PC-3 (cell line): ENCODE measurements at regions of chr1 and their contacts with region 1.

Region 1: GRCh38 chr1:46643368-46643775 is 24.8 kb downstream of the ATPAF1 start:
- DNase-seq: peak; percentile 98
- ATAC-seq: peak; percentile 99
- H3K4me3 ChIP-seq: no peak overlapping the region
- H3K27ac ChIP-seq: peak overlapping the region; percentile 59
- H3K4me1 ChIP-seq: peaks cover 21% of the 10 kb centered on the region
- H3K27me3 ChIP-seq: no peaks in the 10 kb centered on the region
- CTCF ChIP-seq: no peak

Region 2: DNA sequence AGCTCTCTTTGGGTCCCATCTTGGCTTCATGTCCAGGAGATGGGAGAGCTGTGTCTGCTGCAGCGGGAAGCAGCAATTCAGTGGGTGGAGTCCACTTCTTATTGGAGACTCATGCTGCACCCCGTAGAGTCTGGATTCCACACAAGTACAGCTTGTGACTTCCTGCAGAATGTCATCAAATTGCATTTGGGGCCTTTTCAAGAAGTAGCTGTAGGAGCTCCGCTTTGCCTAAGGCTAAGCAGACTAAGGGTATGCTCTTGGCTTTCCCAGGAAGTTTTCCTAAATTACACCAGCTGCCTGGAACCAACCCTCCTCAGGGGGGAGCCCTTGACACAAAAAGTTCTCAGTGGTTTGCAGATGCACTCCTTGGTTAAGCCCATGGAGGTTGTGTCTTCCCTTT is 21.0 kb before region 1 on chr1:
- CTCF ChIA-PET with region 1: no interaction called
- POLR2A ChIA-PET with region 1: no interaction called
- intact Hi-C with region 1: loop called (anchors 2 kb)
- DNase-seq: peak; percentile 64
- ATAC-seq: peak; percentile 66
- H3K4me3 ChIP-seq: peak overlapping the region; percentile 21; the same call in 1 of the 2 replicates
- H3K27ac ChIP-seq: peak overlapping the region; percentile 74
- H3K4me1 ChIP-seq: peaks cover 24% of the 10 kb centered on the region
- H3K27me3 ChIP-seq: no peaks in the 10 kb centered on the region
- CTCF ChIP-seq: peak; percentile 72